Esophagus squamous epithelium (tissue), 5 donors: ENCODE measurements at regions of chr18 and their contacts with region 1.

Region 1: DNA sequence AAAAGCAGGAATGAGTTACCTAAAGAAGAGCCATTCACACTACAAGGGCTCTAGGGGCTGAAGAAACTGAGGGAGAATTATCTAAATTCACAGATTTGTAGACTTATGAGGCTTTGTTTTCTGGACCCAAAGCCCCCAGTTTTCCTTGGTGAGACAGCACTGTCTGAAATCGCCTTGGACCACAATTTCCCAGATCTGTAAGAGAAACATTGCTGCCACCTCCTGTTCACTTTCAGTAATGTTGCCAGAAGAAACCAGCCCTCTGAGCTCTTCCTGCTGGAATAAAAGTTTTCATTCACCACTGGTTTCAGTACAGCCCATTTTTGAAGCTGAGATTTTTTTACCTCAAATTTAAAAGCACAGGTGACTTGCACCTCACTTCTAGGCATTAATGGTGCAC is 169.2 kb downstream of the CDH20 start:
- DNase-seq: no peak
- H3K4me3 ChIP-seq: no peak overlapping the region
- H3K27ac ChIP-seq: no peak overlapping the region
- H3K4me1 ChIP-seq: no peaks in the 10 kb centered on the region
- H3K27me3 ChIP-seq: peaks cover 0 to 8% (median 0%) of the 10 kb centered on the region in 4 donors
- CTCF ChIP-seq: peak in 5 of 6 experiments; percentile 46 to 75 (median 60)
- POLR2A ChIP-seq: no peak

Region 2: DNA sequence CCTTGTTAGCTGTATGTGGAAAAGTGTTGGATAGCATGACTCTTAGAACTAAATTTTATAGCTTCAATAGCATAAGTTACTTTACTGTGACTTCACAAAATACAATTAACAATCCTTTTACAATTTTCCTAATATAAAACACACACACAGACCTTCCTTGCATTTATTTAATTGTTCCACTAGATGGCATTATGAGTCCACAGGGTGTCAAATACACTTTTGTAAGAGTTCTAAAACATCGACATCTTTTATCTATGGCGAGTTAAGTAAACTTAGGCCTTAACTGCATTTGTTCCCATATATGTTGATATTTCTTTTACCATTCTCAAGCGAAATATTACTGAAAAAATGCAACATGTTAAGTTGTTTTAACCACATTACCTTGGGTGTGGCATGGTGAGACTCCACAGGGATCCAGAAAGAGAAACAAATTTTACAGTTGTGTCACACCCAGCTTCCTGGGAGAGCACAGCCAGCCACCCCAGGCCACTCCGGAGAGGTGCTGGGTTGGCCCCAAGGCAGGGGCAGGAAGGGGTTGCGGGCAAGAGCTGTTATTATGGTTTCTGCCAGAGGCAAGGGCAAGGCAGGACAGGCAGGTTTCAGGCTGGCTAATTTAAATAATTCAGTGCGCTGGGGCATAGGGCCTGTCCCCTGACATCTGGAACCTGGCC is 817.5 kb before region 1 on chr18:
- intact Hi-C with region 1: loop called (anchors 10 kb)
- DNase-seq: no peak
- H3K4me3 ChIP-seq: no peak overlapping the region
- H3K27ac ChIP-seq: no peak overlapping the region
- H3K4me1 ChIP-seq: peaks cover 0 to 5% (median 0%) of the 10 kb centered on the region in 3 donors
- H3K27me3 ChIP-seq: no peaks in the 10 kb centered on the region
- CTCF ChIP-seq: peak in 5 of 6 experiments; percentile 12 to 70 (median 50)
- POLR2A ChIP-seq: no peak

Region 3: GRCh38 chr18:60809937-60810336 is 692.5 kb before region 1 on chr18:
- intact Hi-C with region 1: loop called (anchors 10 kb)
- DNase-seq: no peak
- H3K4me3 ChIP-seq: no peak overlapping the region
- H3K27ac ChIP-seq: no peak overlapping the region
- H3K4me1 ChIP-seq: no peaks in the 10 kb centered on the region
- H3K27me3 ChIP-seq: no peaks in the 10 kb centered on the region
- CTCF ChIP-seq: no peak
- POLR2A ChIP-seq: no peak

Region 4: DNA sequence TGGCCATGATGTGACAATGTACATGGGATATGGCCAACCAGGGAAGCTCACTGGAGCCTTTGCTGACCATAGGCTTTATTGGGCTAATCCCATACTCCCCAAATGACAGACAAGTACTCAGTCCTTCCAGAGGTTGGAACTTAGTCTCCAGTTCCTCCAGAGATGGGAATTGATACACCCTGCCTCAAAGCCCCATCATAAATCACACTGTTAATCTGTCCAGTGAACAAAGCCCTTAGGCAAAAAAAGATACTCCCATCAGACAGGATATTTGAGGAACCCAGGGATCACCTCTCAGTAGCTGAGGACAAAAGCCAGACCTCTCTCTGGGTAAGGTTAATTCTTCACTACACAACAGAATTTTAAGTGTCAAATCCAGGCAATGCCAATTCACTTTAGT is 416.7 kb before region 1 on chr18:
- intact Hi-C with region 1: loop called (anchors 10 kb)
- DNase-seq: no peak
- H3K4me3 ChIP-seq: no peak overlapping the region
- H3K27ac ChIP-seq: no peak overlapping the region
- H3K4me1 ChIP-seq: no peaks in the 10 kb centered on the region
- H3K27me3 ChIP-seq: no peaks in the 10 kb centered on the region
- CTCF ChIP-seq: no peak
- POLR2A ChIP-seq: no peak